ENCODE measurements at regions of chr6 and their contacts with region 1.

Region 1: DNA sequence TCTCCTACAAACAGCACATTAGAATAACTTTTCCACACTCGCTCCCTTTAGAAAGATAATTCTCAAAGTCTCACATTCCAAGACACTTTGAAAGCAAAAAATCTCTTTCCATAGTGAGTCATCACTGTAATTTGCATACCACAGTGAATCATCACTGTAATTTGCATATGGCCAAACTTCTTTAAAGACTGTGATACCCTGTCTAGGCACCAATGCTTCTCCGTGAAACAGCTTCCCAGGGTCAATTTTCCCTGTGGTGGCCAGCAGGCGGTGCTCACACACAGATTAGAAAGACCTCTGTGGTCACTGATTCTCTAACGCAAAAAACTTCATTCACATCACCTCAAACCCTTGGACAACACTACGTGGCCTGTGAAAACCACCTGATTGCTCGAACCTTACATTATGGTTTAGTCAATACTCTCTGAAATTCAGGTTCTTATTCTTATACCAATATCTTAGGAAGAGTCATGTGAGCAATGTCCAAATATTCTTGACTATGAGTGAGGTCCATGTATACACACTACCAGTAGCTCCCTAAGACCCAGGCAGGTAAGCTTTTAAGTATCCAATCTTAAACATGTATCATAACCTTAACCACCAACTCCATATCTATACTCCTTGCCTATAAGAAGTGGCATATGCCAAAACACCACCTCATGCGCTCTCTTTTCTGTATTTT is 78.5 kb upstream of the PHACTR1 start:
- DNase-seq: peak; percentile 42
- H3K4me3 ChIP-seq: no peak overlapping the region; a peak in 1 of 4 replicates
- H3K27ac ChIP-seq: no peak overlapping the region
- H3K4me1 ChIP-seq: no peaks in the 10 kb centered on the region
- H3K27me3 ChIP-seq: no peaks in the 10 kb centered on the region
- CTCF ChIP-seq: peak; percentile 78
- EP300 ChIP-seq: no peak
- RAD21 ChIP-seq: peak; percentile 90

Region 2: DNA sequence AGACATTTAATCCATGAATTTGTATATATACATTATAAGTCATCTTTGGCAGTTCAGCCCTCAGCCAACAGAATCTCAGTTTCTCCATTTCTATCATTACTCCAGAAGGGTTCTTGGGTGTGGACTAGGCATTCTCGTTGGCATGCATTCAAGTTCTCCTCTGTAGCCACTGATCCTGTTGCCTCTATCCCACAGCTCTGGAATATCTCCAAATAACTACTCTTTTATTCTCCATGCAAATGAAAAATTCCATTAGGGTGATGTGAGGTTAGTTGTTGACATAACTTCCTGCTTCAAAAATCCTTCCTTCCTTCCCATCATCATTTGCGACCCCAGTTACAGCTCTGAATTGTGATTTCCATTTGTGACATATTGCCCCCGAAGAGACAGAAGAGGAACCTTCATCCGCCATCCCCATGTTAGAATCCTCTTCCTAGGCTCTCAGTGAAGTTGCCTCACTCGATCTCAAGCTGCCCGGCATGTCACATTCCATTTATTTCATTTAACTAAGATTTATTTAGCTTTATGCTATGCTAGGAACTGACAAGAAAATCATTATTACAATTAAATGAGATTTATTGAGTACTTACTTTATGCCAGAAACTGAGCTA is 441.7 kb before region 1 on chr6:
- CTCF ChIA-PET with region 1: no interaction called
- POLR2A ChIA-PET with region 1: no interaction called
- DNase-seq: no peak
- H3K4me3 ChIP-seq: no peak overlapping the region
- H3K27ac ChIP-seq: no peak overlapping the region
- H3K4me1 ChIP-seq: no peaks in the 10 kb centered on the region; a peak in 1 of 4 replicates
- H3K27me3 ChIP-seq: no peaks in the 10 kb centered on the region
- CTCF ChIP-seq: no peak
- EP300 ChIP-seq: no peak
- RAD21 ChIP-seq: no peak

Region 3: DNA sequence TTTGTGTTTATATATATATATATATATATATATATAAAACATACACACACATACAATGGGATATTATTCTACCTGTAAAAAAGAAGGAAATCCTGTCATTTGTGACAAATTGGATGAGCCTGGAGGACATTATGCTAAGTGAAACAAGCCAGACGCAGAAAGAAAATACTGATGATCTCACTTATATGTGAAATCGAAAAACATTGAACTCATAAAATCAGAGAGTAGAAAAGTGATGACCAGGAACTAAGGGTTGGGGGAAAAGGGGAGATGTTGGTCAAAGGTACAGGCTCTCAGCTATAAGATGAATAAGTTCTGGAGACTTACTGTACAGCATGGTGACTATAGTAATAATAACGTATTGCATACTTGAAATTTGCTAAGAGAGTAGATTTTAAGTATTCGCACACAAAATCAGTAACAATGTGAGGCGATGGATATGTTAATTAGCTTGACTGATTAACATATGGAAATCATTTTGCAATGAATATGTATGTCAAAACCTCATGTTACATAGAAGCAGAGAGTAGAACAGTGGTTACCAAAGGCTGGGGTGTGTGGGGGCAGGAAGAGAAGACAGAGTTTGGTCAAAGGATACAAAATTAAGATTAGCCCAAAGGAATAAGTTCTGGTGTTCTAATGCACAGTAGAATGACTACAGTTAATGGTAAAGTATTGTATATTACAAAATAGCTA is 13.8 kb before region 1 on chr6:
- CTCF ChIA-PET with region 1: interaction called, 39 read pairs
- POLR2A ChIA-PET with region 1: no interaction called
- DNase-seq: no peak
- H3K4me3 ChIP-seq: no peak overlapping the region
- H3K27ac ChIP-seq: no peak overlapping the region
- H3K4me1 ChIP-seq: no peaks in the 10 kb centered on the region
- H3K27me3 ChIP-seq: no peaks in the 10 kb centered on the region
- CTCF ChIP-seq: no peak
- EP300 ChIP-seq: no peak
- RAD21 ChIP-seq: no peak

Region 4: GRCh38 chr6:12656906-12657305 is 18.8 kb after region 1 on chr6:
- CTCF ChIA-PET with region 1: interaction called, 14 read pairs
- POLR2A ChIA-PET with region 1: no interaction called
- DNase-seq: no peak
- H3K4me3 ChIP-seq: no peak overlapping the region
- H3K27ac ChIP-seq: no peak overlapping the region
- H3K4me1 ChIP-seq: peaks cover 0 to 4% of the 10 kb centered on the region in 2 experiments; a peak in 1 of 4 replicates
- H3K27me3 ChIP-seq: no peaks in the 10 kb centered on the region
- CTCF ChIP-seq: no peak
- EP300 ChIP-seq: no peak
- RAD21 ChIP-seq: no peak

Region 5: GRCh38 chr6:12679341-12679740 is 41.2 kb after region 1 on chr6:
- CTCF ChIA-PET with region 1: no interaction called
- POLR2A ChIA-PET with region 1: no interaction called
- DNase-seq: no peak
- H3K4me3 ChIP-seq: no peak overlapping the region
- H3K27ac ChIP-seq: no peak overlapping the region
- H3K4me1 ChIP-seq: no peaks in the 10 kb centered on the region
- H3K27me3 ChIP-seq: no peaks in the 10 kb centered on the region
- CTCF ChIP-seq: no peak
- EP300 ChIP-seq: no peak
- RAD21 ChIP-seq: no peak

Region 6: DNA sequence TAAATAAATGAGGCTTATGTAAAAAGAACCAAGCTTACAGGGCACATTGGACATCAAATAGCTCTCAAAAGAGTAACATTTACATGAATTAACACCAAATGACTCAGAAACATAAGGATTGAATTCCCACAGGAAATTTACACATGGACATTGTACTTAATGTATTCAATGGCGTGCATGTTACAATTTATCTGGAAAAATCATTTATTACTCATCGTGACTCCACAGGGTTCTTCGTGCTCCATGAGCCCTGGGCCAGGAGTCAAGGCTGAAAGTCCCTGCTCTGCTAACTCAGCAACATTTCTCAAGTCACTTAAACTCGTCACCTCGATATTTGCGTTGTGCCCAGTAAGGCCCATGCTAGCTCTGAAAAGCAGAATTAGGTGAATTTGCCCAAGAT is 236.9 kb after region 1 on chr6:
- CTCF ChIA-PET with region 1: interaction called, 11 read pairs
- POLR2A ChIA-PET with region 1: no interaction called
- DNase-seq: no peak
- H3K4me3 ChIP-seq: no peak overlapping the region
- H3K27ac ChIP-seq: no peak overlapping the region
- H3K4me1 ChIP-seq: no peaks in the 10 kb centered on the region
- H3K27me3 ChIP-seq: no peaks in the 10 kb centered on the region
- CTCF ChIP-seq: no peak
- EP300 ChIP-seq: no peak
- RAD21 ChIP-seq: no peak

Region 7: DNA sequence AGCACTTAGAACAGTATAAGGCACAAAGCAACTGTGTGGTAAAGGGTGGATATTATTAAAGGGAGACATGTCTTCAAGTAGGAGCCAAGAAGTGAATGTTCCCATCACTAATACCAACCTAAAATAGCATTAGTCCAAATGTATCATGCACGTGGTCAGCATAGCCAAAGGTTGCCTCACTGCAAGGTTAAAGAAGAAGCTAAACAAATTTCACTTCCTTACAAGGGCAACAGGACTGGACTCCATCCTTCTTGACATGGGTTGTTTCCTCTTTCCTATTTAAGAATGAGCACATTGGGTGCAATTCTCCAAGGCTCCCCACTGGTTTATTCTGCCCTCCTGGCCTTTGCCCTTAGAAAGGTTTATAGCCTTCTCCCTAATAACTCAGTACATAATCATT is 265.1 kb after region 1 on chr6:
- CTCF ChIA-PET with region 1: interaction called, 29 read pairs
- POLR2A ChIA-PET with region 1: no interaction called
- DNase-seq: no peak
- H3K4me3 ChIP-seq: no peak overlapping the region
- H3K27ac ChIP-seq: no peak overlapping the region
- H3K4me1 ChIP-seq: no peaks in the 10 kb centered on the region
- H3K27me3 ChIP-seq: no peaks in the 10 kb centered on the region
- CTCF ChIP-seq: no peak
- EP300 ChIP-seq: no peak
- RAD21 ChIP-seq: no peak